ENCODE measurements at regions of chr7 and their contacts with region 1.

Region 1: DNA sequence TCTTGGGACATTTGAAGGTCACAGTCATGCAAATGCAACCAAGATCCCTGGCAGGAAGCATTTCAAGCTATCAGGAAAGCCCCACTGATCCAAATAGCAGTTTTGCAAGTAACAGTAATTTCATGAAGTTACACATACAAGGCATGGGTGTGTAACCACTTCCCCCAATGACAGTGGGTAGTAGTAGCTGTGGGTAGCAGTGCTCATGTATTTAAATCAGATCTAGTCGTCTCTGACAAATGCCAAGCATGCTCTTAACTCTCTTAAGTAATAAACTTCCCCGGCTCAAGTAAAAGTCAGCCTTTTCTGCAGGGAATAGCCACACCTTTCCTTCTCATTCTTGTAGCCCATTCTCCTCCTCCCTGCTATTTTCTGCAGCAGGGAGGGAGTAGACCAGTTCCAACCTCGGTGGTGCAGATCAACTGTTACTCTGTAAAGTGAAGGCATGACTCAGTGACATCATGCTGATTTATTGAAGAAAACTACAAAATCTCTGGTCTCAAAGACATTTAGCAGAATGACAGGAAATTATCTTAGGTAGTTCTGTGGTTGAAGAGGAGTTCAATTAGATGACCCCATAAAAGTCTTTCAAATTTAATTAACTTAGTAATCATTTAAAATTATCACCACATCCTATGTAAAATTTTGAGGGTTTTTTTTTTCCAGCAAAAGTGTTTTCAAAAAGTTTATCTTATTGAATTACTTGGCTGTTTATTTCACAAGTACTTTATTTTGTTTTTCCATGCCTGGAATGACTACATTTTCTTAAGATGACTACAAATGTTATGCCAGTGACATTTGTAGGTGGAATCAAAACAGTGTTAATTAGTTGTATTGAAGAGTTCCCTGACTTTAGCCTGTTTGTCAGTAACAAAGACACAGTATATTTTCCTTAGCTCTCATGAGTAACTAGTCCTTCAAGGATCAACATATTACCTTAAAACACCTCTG is 568.3 kb downstream of the INHBA start:
- DNase-seq: no peak

Region 2: GRCh38 chr7:41705109-41705901 is 570.7 kb after region 1 on chr7:
- intact Hi-C with region 1: no loop called
- DNase-seq: peak; percentile 96

Region 3: GRCh38 chr7:43119371-43120075 is 1984.9 kb after region 1 on chr7:
- intact Hi-C with region 1: loop called in 1 of 2 experiments (anchors 10 kb)
- DNase-seq: no peak

Measured in posterior vena cava (tissue), 2 donors.